Heart right ventricle (tissue), 16 donors: ENCODE measurements at regions of chr10 and their contacts with region 1.

Region 1: DNA sequence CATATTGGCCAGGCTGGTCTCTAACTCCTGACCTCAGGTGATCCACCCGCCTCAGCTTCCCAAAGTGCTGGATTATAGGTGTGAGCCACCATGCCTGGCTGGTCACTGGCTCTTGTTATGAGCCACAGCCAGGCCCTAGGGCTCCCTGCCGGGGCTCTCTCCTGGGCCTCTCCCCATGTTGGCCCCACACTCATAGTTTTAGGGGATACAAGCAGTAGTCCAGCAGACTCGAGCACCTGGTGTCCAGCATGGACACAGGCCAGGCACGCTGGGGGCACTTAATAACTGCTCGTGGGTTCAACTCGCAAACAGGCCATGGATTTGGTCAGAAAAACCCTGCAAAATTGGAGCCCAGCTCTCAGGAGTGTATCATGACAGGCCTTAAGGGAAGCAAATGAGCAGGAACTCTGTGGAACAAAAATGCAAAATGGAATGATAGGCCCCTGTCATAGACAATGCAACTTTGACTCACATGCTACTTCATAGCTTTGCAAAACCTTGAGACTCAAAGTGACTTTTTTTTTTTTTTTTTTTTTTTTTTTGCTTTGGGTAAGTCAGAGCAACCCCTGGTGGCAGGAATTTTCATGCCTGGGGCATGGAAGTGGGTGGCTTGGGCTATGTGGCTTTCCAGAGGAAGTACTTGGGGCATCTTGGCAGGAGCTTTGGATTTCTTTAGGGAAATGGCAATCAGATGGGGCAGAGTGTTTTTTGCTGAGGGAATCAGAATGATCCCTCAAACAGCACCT is 62.5 kb downstream of the TACC2 start:
- DNase-seq: peak; percentile 30 to 38
- ATAC-seq: peak in 5 of 8 donors; percentile 28 to 43 (median 30)
- H3K4me3 ChIP-seq: no peak overlapping the region
- H3K27ac ChIP-seq: peak overlapping the region in 7 of 10 donors; percentile 20 to 72 (median 40)
- H3K4me1 ChIP-seq: peaks cover 13 to 62% (median 34%) of the 10 kb centered on the region in 9 donors
- H3K27me3 ChIP-seq: no peaks in the 10 kb centered on the region
- CTCF ChIP-seq: peak; percentile 42 to 77 (median 68)

Region 2: DNA sequence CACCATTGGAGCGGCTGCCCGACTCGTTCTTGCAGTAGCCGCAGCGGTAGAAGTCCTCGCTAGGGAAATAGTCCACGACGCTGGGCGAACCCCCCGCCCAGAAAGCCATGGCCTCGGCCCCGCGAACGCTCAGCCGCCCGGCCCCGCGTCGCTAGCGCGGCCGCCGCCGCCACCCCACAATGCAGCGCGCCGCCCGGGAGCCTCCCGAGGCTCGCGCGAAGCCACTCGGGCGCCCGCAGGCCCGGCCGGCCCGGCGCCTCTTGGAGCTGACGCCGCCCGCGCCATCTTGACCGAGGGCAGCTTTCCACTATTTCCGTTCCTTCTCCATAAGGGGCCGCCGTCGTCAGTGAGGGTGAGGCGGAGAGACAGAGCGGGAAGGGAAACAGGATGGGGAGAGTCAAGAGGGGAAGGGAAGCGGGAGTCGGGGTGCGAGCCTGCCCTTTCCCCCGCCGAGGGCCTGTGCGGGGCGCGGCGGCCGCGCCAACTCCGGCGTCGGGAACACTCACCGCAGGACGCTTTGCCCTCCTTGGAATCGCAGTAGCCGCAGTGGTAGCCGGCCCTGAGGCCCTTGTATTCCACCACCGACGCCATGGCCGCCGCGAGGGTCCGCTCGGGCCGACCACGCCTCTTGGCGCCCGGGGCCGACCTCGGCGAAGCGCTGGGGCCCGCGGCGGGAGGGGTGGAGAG is 123.4 kb before region 1 on chr10 and contains the start of gene ATE1:
- intact Hi-C with region 1: loop called in 4 of 10 experiments (anchors 5 kb)
- DNase-seq: peak; percentile 92 to 93
- ATAC-seq: peak; percentile 94 to 98 (median 97)
- H3K4me3 ChIP-seq: peak within 1 kb of the TSS; percentile 90 to 100 (median 97)
- H3K27ac ChIP-seq: peak within 1 kb of the TSS; percentile 97 to 100 (median 99)
- H3K4me1 ChIP-seq: peaks cover 0 to 49% (median 33%) of the 10 kb centered on the region in 9 donors
- H3K27me3 ChIP-seq: no peaks in the 10 kb centered on the region
- CTCF ChIP-seq: peak in 5 of 9 donors; percentile 6 to 40 (median 22)
- total RNA-seq, gene ATE1: 36.1 to 57.7 (median 43.2) TPM

Region 3: DNA sequence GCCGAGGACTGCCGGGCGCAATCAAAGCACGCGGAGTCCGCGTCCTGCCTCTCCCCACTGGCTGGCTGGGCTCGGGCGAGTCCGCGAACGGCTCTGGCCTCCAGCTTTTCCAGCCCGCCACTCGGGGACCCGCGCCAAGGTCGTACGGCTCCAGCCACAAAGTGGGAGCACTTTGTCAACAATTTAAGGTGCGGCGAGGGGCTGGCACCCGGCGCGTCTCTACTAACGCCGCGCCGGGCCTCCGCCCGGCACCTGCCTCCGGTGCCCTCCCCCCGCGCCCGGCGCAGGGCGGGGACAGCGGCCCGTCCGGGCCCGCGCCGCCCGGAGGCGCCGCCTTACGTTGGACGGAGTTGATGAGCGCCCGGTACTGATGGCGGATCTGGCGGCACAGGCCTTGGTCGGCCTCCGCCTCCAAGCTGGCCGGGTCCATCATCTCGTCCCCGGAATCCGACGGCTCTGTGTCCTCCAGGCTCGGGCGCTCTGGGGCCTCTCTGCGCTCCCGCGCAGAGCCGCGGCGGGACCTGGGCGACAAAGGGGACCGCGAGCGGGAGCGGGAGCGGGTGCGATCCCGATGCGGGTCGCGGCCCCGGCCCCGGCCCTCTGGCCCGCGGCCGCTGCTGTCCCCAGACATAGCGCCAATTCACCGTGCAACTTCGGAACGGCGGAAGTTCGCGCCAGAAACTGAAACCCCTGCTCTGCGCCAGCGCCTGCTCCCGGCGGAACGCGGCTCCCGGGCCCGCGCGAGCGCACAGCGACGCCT is 76.7 kb before region 1 on chr10 and contains the start of gene NSMCE4A:
- intact Hi-C with region 1: loop called in 2 of 10 experiments (anchors 2 to 5 kb)
- DNase-seq: peak; percentile 81 to 86
- ATAC-seq: peak; percentile 90 to 96 (median 93)
- H3K4me3 ChIP-seq: peak within 1 kb of the TSS; percentile 67 to 99 (median 88)
- H3K27ac ChIP-seq: peak within 1 kb of the TSS; percentile 91 to 99 (median 98)
- H3K4me1 ChIP-seq: peaks cover 0 to 30% (median 23%) of the 10 kb centered on the region in 9 donors
- H3K27me3 ChIP-seq: no peaks in the 10 kb centered on the region
- CTCF ChIP-seq: peak in 4 of 9 donors; percentile 66 to 87 (median 76)
- total RNA-seq, gene NSMCE4A: 18.2 to 35.4 (median 24.4) TPM

Region 4: DNA sequence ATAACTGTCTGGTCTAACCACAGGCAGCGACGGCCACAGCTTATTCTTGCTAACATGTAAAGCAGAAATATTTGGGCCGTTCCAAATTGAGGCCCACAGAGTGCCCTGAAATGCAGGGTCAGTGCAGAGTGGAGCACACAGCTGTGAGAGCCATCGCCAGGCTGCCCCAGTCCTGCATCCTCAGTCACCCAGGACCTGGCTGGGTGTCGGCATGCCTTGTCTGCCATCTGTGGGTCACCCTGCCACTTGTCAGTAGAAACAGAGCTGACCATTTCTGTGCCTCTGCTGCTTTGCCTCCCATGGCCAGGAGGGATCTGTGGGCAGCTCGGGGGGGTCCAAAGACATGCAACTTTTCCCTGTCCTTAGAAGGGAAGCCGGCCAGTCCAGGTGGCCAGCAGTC is 162.3 kb after region 1 on chr10:
- intact Hi-C with region 1: loop called in 3 of 10 experiments (anchors 10 kb)
- DNase-seq: no peak
- ATAC-seq: peak in 7 of 8 donors; percentile 30 to 67 (median 58)
- H3K4me3 ChIP-seq: no peak overlapping the region
- H3K27ac ChIP-seq: no peak overlapping the region
- H3K4me1 ChIP-seq: peaks cover 0 to 12% (median 0%) of the 10 kb centered on the region in 9 donors
- H3K27me3 ChIP-seq: no peaks in the 10 kb centered on the region
- CTCF ChIP-seq: peak in 3 of 9 donors; percentile 18 to 35 (median 31)

Region 5: GRCh38 chr10:122267849-122268737 is 216.7 kb after region 1 on chr10:
- intact Hi-C with region 1: loop called in 2 of 10 experiments (anchors 10 kb)
- DNase-seq: peak in 1 of 2 donors; percentile 48
- ATAC-seq: peak; percentile 43 to 78 (median 70)
- H3K4me3 ChIP-seq: no peak overlapping the region
- H3K27ac ChIP-seq: no peak overlapping the region
- H3K4me1 ChIP-seq: peaks cover 0 to 42% (median 8%) of the 10 kb centered on the region in 9 donors
- H3K27me3 ChIP-seq: no peaks in the 10 kb centered on the region
- CTCF ChIP-seq: peak; percentile 88 to 95 (median 92)

Region 6: GRCh38 chr10:122279725-122280141 is 228.3 kb after region 1 on chr10:
- intact Hi-C with region 1: loop called in 1 of 10 experiments (anchors 10 kb)
- DNase-seq: peak in 1 of 2 donors; percentile 49
- ATAC-seq: peak in 7 of 8 donors; percentile 36 to 73 (median 66)
- H3K4me3 ChIP-seq: no peak overlapping the region
- H3K27ac ChIP-seq: peak overlapping the region in 1 of 10 donors; percentile 25
- H3K4me1 ChIP-seq: peaks cover 0 to 13% (median 3%) of the 10 kb centered on the region in 9 donors
- H3K27me3 ChIP-seq: no peaks in the 10 kb centered on the region
- CTCF ChIP-seq: peak in 8 of 9 donors; percentile 38 to 71 (median 62)